ENCODE measurements at regions of chr17 and their contacts with region 1.

Region 1: DNA sequence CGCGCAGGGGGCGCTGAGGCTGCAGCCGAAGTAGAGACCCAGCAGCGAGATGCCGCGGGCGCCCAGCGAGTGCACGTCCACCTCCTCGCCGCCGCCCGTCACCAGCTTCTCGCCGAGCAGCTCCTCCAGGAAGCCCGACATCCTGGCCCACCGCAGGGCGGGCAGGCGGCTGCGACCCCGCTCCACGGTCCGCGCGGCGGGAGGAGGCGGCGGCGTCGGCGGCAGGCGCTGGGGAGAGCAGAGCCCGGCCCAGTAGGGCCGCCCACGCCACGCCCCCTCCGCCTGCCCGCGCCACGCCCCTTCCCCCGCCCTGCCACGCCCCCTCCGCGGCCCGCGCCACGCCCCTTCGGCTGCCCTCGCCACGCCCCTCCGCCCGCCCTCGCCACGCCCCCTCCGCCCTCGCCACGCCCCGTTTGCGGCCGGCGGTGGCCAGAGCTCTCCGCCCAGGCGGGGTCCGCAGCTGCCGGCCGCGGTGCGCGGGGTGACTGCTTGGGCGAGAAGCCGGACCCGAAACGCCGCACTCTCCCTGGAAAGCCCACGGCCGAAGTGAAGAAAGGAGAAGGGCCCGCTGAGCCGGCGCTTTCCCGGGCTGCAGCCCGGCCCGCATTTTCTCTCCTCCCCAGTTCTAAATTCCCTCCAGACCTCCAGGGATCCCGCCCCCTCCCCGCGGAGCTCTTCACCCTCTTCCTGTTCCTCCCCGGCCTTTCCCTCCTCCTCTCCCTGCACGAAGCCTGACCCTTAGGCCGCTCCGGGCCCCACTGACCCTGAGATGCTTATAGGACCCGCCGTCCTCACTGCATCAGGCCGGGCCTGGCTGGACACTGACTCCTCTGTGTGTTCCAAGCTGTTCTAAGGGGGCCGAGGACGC is at the start of gene NXN:
- DNase-seq: peak; percentile 95
- ATAC-seq: peak; percentile 82
- H3K4me3 Mint-ChIP-seq: peak within 1 kb of the TSS; percentile 83
- H3K27ac Mint-ChIP-seq: no peak within 1 kb of the TSS
- H3K4me1 Mint-ChIP-seq: peaks cover 10% of the 10 kb centered on the region
- H3K27me3 Mint-ChIP-seq: peaks cover 28% of the 10 kb centered on the region
- total RNA-seq, gene NXN: 0.22 to 0.37 TPM

Region 2: GRCh38 chr17:996554-997344 is 17.0 kb after region 1 on chr17 and contains the start of gene TIMM22:
- POLR2A ChIA-PET with region 1: interaction called, 13 read pairs
- DNase-seq: peak; percentile 94
- ATAC-seq: peak; percentile 94
- H3K4me3 Mint-ChIP-seq: peak within 1 kb of the TSS; percentile 98
- H3K27ac Mint-ChIP-seq: peak within 1 kb of the TSS; percentile 99
- H3K4me1 Mint-ChIP-seq: peaks cover 16% of the 10 kb centered on the region
- H3K27me3 Mint-ChIP-seq: no peaks in the 10 kb centered on the region
- total RNA-seq, gene TIMM22: 10.3 to 10.7 TPM